ENCODE measurements at regions of chrX and their contacts with region 1.

Region 1: GRCh38 chrX:31036895-31037294 is 34.9 kb downstream of the FTHL17 start:
- DNase-seq: no peak
- ATAC-seq: peak; percentile 85
- H3K4me3 ChIP-seq: no peak overlapping the region
- H3K27ac ChIP-seq: no peak overlapping the region
- H3K4me1 ChIP-seq: no peaks in the 10 kb centered on the region
- H3K27me3 ChIP-seq: no peaks in the 10 kb centered on the region
- CTCF ChIP-seq: peak; percentile 76 to 81 (median 79); a peak in 5 of 6 replicates
- EP300 ChIP-seq: no peak
- POLR2A ChIP-seq: no peak
- RAD21 ChIP-seq: peak; percentile 78

Region 2: DNA sequence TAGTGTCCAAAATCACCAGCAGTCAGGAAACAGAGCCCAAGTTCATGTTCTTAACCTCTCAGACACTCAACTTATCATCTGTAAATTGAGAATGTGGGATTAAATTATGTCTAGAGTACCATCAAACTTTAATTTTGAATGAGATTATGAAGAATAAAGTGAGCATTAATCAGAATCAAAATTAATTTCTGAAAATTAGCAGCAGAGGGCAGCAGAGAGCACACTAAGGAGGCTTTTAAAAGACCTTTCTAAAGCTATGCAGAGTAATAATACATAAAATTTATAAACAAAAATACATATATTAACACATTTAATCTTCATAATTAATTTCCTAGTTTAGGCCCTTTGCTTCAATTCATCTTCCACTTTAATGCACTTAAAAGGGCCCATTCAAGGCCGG is 466.4 kb before region 1 on chrX:
- CTCF ChIA-PET with region 1: no interaction called
- POLR2A ChIA-PET with region 1: no interaction called
- RAD21 ChIA-PET with region 1: no interaction called
- SMC1A ChIA-PET with region 1: no interaction called
- in situ Hi-C with region 1: no loop called
- intact Hi-C with region 1: no loop called
- DNase-seq: no peak
- ATAC-seq: peak; percentile 3; the same call in 1 of the 3 replicates
- H3K4me3 ChIP-seq: no peak overlapping the region
- H3K27ac ChIP-seq: no peak overlapping the region
- H3K4me1 ChIP-seq: peaks cover 19% of the 10 kb centered on the region
- H3K27me3 ChIP-seq: no peaks in the 10 kb centered on the region
- CTCF ChIP-seq: peak; percentile 33 to 57 (median 44); a peak in 5 of 6 replicates
- EP300 ChIP-seq: no peak
- POLR2A ChIP-seq: no peak
- RAD21 ChIP-seq: peak; percentile 65

Region 3: DNA sequence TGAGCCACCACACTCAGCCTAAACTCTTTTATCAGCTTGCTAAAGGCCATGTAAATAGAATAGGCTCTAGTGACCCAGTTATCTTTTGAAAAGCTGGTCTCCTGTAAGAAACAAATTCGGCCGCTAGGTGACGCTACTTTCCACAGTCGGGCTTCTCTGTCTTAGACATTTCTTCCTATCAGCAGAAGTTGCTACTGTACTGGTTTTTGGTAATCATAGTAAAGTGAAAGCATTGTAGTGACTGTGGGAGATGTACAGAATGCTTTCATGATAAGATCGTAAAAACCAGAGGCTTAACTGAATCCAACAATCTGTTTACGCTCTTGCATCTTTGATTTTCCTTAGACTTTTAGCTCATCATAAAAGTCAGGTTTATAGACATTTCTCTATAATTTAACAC is 301.1 kb before region 1 on chrX:
- CTCF ChIA-PET with region 1: interaction called, 26 read pairs
- POLR2A ChIA-PET with region 1: no interaction called
- RAD21 ChIA-PET with region 1: interaction called, 16 read pairs
- SMC1A ChIA-PET with region 1: interaction called, 29 read pairs
- in situ Hi-C with region 1: no loop called
- intact Hi-C with region 1: loop called (anchors 5 kb)
- DNase-seq: peak; percentile 35
- ATAC-seq: peak; percentile 97
- H3K4me3 ChIP-seq: no peak overlapping the region
- H3K27ac ChIP-seq: no peak overlapping the region
- H3K4me1 ChIP-seq: no peaks in the 10 kb centered on the region
- H3K27me3 ChIP-seq: no peaks in the 10 kb centered on the region
- CTCF ChIP-seq: peak; percentile 83 to 88 (median 88)
- EP300 ChIP-seq: no peak
- POLR2A ChIP-seq: no peak
- RAD21 ChIP-seq: peak; percentile 91

Region 4: DNA sequence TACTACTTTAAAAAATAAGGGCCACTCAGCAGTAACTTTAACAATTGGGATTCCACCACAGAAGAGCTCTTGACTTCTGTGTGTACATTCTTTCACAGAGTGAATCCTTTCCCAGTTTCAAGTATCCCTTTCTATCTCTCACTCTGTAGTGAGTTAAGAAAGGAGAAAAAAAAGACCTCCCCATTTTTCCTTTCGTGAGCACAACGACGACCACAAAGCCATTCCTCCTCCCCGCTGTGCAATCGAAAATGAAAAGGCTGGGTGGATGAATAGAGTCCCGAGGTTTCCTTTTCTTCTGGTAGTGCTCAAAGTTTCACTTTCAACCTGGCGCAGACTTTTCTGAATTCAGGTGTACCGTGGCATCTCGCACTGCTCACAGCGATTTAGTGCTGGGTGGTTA is 205.8 kb before region 1 on chrX:
- CTCF ChIA-PET with region 1: no interaction called
- POLR2A ChIA-PET with region 1: no interaction called
- RAD21 ChIA-PET with region 1: no interaction called
- SMC1A ChIA-PET with region 1: no interaction called
- in situ Hi-C with region 1: no loop called
- intact Hi-C with region 1: no loop called
- DNase-seq: no peak
- ATAC-seq: peak; percentile 92
- H3K4me3 ChIP-seq: no peak overlapping the region
- H3K27ac ChIP-seq: no peak overlapping the region
- H3K4me1 ChIP-seq: no peaks in the 10 kb centered on the region
- H3K27me3 ChIP-seq: no peaks in the 10 kb centered on the region
- CTCF ChIP-seq: no peak
- EP300 ChIP-seq: no peak
- POLR2A ChIP-seq: no peak
- RAD21 ChIP-seq: no peak

Region 5: DNA sequence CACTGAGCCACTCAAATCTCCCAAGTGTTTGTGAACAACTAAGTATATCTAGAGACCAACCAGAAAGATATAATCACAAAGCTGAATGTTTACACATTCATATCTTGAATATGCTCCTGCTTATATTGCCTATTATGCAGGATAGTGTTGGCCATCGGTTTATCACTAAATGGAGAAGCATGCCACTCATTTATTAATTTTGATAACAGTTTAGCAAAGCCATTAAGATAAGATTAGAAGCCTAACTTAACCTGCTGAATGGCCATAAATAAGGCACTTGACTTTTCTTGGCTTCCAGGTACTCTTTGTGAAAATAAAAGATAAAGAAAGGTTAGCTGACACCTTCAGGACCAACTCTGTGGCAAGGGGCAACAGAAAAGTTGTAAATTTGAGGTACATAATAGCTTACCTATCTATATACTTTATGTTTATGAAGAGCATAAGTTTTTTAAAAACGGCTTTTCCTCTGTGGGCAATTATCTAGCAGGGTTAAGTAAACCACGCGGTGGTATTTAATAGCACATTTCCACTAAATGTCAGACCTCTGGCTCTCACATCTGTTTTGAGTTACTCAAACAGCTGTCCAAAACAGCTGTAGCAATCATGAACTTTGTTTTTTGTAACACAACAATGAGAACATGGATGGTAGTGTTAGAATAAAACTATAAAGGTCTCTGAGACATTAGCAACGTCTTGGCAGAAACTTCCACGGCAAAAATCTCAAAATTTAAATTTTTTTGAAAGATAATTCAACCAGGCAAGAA is 93.7 kb after region 1 on chrX:
- CTCF ChIA-PET with region 1: interaction called, 15 read pairs
- POLR2A ChIA-PET with region 1: no interaction called
- RAD21 ChIA-PET with region 1: interaction called, 5 read pairs
- SMC1A ChIA-PET with region 1: interaction called, 8 read pairs
- in situ Hi-C with region 1: no loop called
- intact Hi-C with region 1: no loop called
- DNase-seq: no peak
- ATAC-seq: no peak
- H3K4me3 ChIP-seq: no peak overlapping the region
- H3K27ac ChIP-seq: no peak overlapping the region
- H3K4me1 ChIP-seq: 0 out of 2 replicates have a peak, but pooled peaks cover 1% of the 10 kb centered on the region
- H3K27me3 ChIP-seq: no peaks in the 10 kb centered on the region
- CTCF ChIP-seq: no peak
- EP300 ChIP-seq: no peak
- POLR2A ChIP-seq: no peak
- RAD21 ChIP-seq: no peak

Region 6: DNA sequence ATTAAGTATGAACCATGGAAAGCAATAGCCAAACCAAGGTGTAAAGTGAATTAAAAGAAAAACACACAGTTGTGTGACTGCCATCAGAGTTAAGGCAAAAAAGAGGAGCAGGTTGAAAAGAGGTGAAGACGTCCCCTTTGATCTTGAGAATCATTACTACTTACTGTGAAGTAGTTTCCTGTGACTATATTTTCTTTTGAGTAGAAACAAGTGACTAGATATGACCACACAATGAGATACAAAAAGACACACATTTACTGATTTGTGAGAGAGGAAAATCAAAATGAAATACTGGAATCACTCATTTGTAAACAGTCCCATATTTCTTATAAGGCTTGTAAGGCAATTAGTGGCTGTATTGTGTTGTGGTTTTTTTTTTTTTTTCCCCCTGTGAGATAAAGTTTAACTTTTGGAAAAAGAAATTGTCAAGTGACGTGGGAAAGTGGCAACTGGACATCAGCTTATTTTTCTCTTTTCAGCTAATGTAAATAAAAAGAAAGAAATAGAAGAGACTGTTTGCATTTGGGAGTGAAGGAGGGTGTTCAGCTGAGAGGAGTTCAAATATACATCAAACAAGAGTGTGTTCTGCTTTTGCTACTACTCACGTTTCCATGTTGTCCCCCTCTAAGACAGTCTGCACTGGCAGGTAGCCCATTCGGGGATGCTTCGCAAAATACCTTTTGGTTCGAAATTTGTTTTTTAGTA is 141.3 kb after region 1 on chrX:
- CTCF ChIA-PET with region 1: interaction called, 20 read pairs
- POLR2A ChIA-PET with region 1: no interaction called
- RAD21 ChIA-PET with region 1: interaction called, 3 read pairs
- SMC1A ChIA-PET with region 1: interaction called, 15 read pairs
- in situ Hi-C with region 1: no loop called
- intact Hi-C with region 1: loop called (anchors 2 kb)
- DNase-seq: peak; percentile 42
- ATAC-seq: peak; percentile 82
- H3K4me3 ChIP-seq: no peak overlapping the region
- H3K27ac ChIP-seq: peak overlapping the region; percentile 59
- H3K4me1 ChIP-seq: no peaks in the 10 kb centered on the region
- H3K27me3 ChIP-seq: no peaks in the 10 kb centered on the region
- CTCF ChIP-seq: no peak
- EP300 ChIP-seq: no peak
- POLR2A ChIP-seq: no peak
- RAD21 ChIP-seq: no peak

Region 7: GRCh38 chrX:31223817-31224216 is 186.9 kb after region 1 on chrX:
- CTCF ChIA-PET with region 1: interaction called, 7 read pairs
- POLR2A ChIA-PET with region 1: no interaction called
- RAD21 ChIA-PET with region 1: interaction called, 10 read pairs
- SMC1A ChIA-PET with region 1: interaction called, 213 read pairs
- in situ Hi-C with region 1: no loop called
- intact Hi-C with region 1: no loop called
- DNase-seq: no peak
- ATAC-seq: peak; percentile 86
- H3K4me3 ChIP-seq: no peak overlapping the region
- H3K27ac ChIP-seq: peak overlapping the region; percentile 18; the same call in 1 of the 2 replicates
- H3K4me1 ChIP-seq: peaks cover 10% of the 10 kb centered on the region
- H3K27me3 ChIP-seq: no peaks in the 10 kb centered on the region
- CTCF ChIP-seq: 0 out of 6 replicates have a peak, but pooled peaks of 1 of the 3 experiments have one; percentile 4
- EP300 ChIP-seq: no peak
- POLR2A ChIP-seq: no peak
- RAD21 ChIP-seq: no peak

Region 8: DNA sequence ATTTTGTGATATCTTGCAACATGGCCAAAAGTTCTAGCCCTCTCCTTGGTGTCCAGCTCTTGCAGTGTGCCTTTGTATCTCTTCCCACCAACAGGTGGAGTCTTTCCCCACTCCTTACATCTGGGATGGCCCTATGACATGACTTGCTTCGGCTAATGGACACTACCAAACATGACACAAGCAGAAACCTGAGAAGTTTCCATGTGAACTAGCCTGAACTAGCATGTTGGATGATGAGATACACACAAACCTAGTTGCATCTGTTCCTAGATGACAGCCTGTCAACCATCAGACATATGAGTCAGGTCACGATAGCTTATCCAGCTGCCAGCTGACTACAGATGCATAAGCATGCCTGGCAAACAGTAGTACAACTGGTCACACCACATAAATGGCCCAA is 242.5 kb after region 1 on chrX:
- CTCF ChIA-PET with region 1: interaction called, 20 read pairs
- POLR2A ChIA-PET with region 1: no interaction called
- RAD21 ChIA-PET with region 1: interaction called, 7 read pairs
- SMC1A ChIA-PET with region 1: interaction called, 21 read pairs
- in situ Hi-C with region 1: no loop called
- intact Hi-C with region 1: no loop called
- DNase-seq: no peak
- ATAC-seq: peak; percentile 41
- H3K4me3 ChIP-seq: no peak overlapping the region
- H3K27ac ChIP-seq: no peak overlapping the region
- H3K4me1 ChIP-seq: no peaks in the 10 kb centered on the region
- H3K27me3 ChIP-seq: no peaks in the 10 kb centered on the region
- CTCF ChIP-seq: no peak; a peak in 1 of 6 replicates
- EP300 ChIP-seq: no peak
- POLR2A ChIP-seq: no peak
- RAD21 ChIP-seq: 0 out of 2 replicates have a peak, but pooled peaks have one; percentile 9

Region 9: DNA sequence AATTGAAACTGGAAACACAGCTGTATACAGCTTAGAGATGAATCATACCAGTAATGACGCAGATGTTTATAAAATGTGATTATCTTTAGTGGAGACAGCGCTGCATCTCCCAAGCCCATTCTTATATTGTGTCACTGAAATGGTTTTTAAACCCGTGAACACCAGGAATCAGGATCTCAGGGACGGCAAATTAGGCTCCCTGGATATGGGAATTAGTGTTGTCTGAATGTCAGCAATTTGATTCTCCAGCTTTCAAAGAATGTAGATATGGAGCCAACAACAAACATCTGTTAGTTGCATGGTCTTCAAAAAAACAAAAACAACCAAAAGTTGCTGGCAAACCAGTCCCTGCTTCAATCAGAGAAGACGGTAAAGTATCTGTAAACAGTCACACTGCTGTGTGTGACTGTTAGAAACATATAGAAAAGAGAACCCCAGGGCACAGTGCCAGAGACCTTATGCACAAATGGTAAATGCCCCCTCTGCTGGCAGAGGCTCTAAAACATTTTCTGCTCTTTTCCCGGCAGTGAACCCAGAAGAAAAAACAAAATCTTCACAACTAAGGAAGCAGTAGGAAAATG is 386.8 kb after region 1 on chrX:
- CTCF ChIA-PET with region 1: interaction called, 69 read pairs
- POLR2A ChIA-PET with region 1: no interaction called
- RAD21 ChIA-PET with region 1: interaction called, 10 read pairs
- SMC1A ChIA-PET with region 1: interaction called, 56 read pairs
- in situ Hi-C with region 1: loop called (anchors 10 kb)
- intact Hi-C with region 1: loop called (anchors 2 kb)
- DNase-seq: no peak
- ATAC-seq: peak; percentile 72
- H3K4me3 ChIP-seq: no peak overlapping the region
- H3K27ac ChIP-seq: no peak overlapping the region
- H3K4me1 ChIP-seq: no peaks in the 10 kb centered on the region
- H3K27me3 ChIP-seq: no peaks in the 10 kb centered on the region
- CTCF ChIP-seq: peak; percentile 14 to 40 (median 34); a peak in 4 of 6 replicates
- EP300 ChIP-seq: no peak
- POLR2A ChIP-seq: no peak
- RAD21 ChIP-seq: no peak

Measured in GM12878 (cell line).